Calu3 (cell line): ENCODE measurements at regions of chr18 and their contacts with region 1.

Region 1: GRCh38 chr18:37346048-37346447 is 219.6 kb downstream of the CELF4 start:
- DNase-seq: no peak
- H3K4me3 Mint-ChIP-seq: no peak overlapping the region
- H3K27ac Mint-ChIP-seq: no peak overlapping the region
- H3K4me1 Mint-ChIP-seq: peaks cover 7% of the 10 kb centered on the region
- H3K27me3 Mint-ChIP-seq: peaks cover 100% of the 10 kb centered on the region
- CTCF ChIP-seq: no peak

Region 2: DNA sequence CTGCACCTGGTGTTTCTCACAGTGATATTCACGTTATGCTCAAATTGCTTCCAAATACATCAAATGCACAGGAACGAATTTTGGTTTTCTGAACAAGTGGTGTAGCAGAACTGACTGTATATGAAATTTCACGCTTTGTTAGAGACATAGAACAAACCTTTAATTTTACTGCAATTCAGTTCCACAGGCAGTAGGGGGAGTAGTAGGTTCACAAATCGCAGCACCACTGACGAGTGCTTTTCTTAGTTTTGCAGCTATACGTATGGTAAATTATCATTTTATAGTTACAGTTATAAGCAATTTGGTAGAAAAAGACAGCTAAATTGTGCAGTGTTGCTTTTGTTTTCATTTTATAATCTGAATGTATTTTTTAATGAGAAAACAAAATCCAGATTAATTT is 403.8 kb before region 1 on chr18:
- CTCF ChIA-PET with region 1: no interaction called
- intact Hi-C with region 1: loop called (anchors 10 kb)
- DNase-seq: peak; percentile 40
- H3K4me3 Mint-ChIP-seq: no peak overlapping the region
- H3K27ac Mint-ChIP-seq: no peak overlapping the region
- H3K4me1 Mint-ChIP-seq: peaks cover 10% of the 10 kb centered on the region
- H3K27me3 Mint-ChIP-seq: no peaks in the 10 kb centered on the region
- CTCF ChIP-seq: peak; percentile 73